Activated CD4-positive, alpha-beta memory T cell treated with anti-CD3 and anti-CD28 coated beads, Interleukin-2, amount 10 ng/mL, durations not matched to agents 7 days and 5 days (primary cell): ENCODE measurements at regions of chr6 and their contacts with region 1.

Region 1: GRCh38 chr6:134174672-134175198 is 122.3 kb upstream of the SLC2A12 start:
- DNase-seq: peak; percentile 93
- H3K4me3 Mint-ChIP-seq: peak overlapping the region; percentile 87
- H3K27ac Mint-ChIP-seq: peak overlapping the region; percentile 96
- H3K4me1 Mint-ChIP-seq: peaks cover 69% of the 10 kb centered on the region
- H3K27me3 Mint-ChIP-seq: no peaks in the 10 kb centered on the region

Region 2: DNA sequence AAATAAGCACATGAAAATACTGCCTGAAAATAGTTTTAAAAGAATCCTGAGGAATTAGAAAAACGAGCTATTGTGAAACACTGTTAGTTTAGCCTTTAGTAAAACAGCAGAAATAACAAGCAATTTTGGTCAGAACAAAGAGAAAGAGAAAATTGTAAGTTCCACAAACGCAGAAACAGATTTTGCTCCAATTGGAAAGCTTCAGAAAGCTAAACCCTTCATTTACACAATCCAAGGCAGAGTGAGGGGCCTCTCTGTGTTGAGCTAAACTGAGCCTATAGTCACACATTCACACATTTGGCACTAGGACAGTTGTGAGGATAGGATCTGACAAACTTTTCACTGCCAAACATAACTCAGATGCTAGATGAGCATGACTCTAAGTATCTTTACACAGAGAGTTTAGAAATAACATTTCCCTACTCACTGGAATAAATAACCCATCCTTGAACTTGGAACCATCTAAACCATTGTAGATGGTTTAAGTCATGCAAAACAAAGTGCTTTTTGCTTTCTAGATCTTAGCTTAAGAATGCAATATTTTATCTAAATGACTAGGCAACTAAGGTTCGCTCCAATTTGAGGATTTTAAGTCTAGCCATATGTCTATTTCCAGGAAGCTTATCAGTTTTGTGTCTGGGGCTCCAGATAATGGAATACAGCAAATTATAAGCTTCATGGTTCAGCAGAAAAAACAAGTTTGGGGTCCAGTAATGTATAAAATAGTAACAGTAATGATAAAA is 20.6 kb after region 1 on chr6:
- CTCF ChIA-PET with region 1: interaction called, 12 read pairs
- POLR2A ChIA-PET with region 1: no interaction called
- DNase-seq: no peak
- H3K4me3 Mint-ChIP-seq: no peak overlapping the region
- H3K27ac Mint-ChIP-seq: no peak overlapping the region
- H3K4me1 Mint-ChIP-seq: peaks cover 25% of the 10 kb centered on the region
- H3K27me3 Mint-ChIP-seq: no peaks in the 10 kb centered on the region

Region 3: DNA sequence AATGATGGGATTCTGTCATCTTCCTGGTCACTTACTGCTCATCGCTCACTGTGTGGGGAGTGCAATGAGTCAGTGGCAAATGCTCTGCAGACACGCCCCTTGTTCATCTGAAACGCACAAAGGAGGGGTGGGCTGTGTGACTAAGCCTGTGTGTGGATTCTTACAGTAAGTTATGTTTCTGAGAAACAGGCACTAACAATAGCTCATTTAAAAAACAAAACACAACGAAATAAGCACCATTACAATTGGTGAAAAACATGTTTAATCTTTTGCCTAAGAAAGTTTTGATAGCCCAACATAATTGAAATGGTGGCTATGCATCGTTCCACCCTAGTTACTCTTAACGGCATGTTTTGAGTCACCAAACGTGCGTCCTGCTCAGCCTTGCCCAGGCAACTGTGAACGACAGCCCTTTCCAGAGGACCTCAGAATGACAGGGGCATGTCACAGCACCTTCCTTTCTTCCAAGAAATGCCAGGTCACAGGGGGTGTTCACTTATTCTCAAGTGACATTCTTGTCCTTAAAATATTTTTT is 261.6 kb after region 1 on chr6:
- CTCF ChIA-PET with region 1: interaction called, 20 read pairs
- POLR2A ChIA-PET with region 1: interaction called, 20 read pairs
- DNase-seq: peak; percentile 82
- H3K4me3 Mint-ChIP-seq: peak overlapping the region; percentile 67
- H3K27ac Mint-ChIP-seq: peak overlapping the region; percentile 93
- H3K4me1 Mint-ChIP-seq: peaks cover 36% of the 10 kb centered on the region
- H3K27me3 Mint-ChIP-seq: no peaks in the 10 kb centered on the region